HepG2 (cell line): ENCODE measurements at regions of chr19 and their contacts with region 1.

Region 1: DNA sequence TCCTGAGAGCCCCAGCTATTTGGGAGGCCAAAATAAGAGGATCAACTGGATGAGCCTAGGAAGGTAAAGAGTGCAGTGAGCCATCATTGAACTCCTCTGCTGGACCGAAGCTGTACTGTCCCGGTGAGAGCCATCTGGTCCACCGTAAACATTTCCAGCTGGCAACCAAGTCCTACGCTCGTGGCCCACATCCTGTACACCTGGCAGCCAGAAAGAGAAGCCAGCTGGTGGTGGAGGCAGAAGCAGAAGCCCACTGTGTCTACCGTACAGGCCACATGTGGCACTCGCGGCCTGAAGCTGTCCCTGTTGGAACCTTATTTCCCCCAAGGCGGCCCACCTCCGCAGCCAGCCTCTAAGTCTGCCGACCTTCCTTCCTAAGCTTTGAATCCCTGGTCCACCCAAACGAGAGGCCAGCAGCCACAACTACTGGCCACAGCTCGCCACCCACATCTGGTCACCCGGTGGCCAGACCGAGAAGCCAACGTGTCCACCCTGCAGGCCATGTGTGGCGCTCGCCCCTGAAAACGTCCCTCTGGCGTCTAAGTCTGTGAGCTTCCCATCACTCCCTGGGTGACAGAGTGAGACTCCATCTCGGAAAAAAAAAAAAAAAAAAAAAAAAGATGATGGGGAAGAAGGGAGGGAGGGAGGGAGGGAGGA is 14.2 kb upstream of the ZNF91 start:
- DNase-seq: no peak
- ATAC-seq: peak; percentile 62
- H3K4me3 ChIP-seq: no peak overlapping the region
- H3K27ac ChIP-seq: no peak overlapping the region
- H3K4me1 ChIP-seq: peaks cover 16% of the 10 kb centered on the region
- H3K27me3 ChIP-seq: no peaks in the 10 kb centered on the region
- CTCF ChIP-seq: no peak
- EP300 ChIP-seq: no peak
- POLR2A ChIP-seq: no peak
- RAD21 ChIP-seq: no peak

Region 2: DNA sequence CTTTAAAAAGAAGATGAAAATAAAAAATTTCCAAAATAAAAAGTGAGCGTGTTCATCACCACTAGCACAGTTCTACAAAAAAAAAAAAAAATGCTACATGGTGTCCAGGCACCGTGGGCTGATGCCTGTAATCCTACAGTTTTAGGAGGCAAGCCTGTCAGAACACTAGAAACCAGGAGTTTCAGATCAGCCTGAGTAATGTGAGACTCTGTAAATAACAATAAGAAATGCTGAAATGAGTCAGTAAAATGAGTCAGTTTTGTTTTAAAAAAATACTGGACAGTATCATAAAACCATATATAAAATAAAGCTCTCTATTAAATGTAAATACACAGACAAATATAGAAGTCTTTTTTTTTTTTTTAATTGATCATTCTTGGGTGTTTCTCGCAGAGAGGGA is 44.3 kb before region 1 on chr19:
- CTCF ChIA-PET with region 1: no interaction called
- POLR2A ChIA-PET with region 1: no interaction called
- in situ Hi-C with region 1: no loop called
- intact Hi-C with region 1: no loop called
- DNase-seq: no peak
- ATAC-seq: no peak
- H3K4me3 ChIP-seq: no peak overlapping the region
- H3K27ac ChIP-seq: no peak overlapping the region
- H3K4me1 ChIP-seq: no peaks in the 10 kb centered on the region
- H3K27me3 ChIP-seq: no peaks in the 10 kb centered on the region
- CTCF ChIP-seq: no peak
- EP300 ChIP-seq: no peak
- POLR2A ChIP-seq: no peak
- RAD21 ChIP-seq: no peak

Region 3: DNA sequence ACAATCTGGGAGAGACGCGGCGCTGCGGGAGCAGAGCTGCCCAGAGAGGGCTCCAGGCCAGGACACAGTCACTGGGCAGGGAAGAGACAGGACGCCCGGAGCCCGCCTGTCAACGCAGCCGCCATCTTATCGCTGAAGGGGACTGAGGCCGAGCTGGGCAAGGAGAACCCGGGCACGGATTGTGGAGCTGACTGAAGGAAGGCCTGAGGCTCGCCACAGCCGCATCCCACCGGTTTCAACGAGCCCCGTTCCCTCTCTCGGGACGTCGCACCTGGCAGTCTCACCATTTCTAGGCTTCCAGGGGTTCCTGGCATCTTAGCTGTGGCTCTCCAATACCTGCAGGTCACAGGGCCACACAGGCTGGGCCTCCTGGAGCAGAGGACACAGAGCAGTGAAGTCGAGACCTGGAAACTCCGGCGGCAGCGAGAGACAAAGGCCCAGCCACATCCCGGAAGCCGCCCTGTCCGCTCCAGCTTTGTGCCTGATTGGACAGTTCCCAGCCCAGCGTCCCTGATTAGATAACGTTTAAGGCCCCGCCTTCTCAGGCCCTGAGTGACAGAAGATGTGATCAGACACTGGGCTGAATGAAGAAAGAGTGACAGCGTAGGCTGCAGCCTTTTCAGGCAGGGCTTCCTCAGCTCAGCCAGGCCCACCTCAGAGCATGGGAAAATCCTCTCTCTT is 14.3 kb before region 1 on chr19 and contains the start of gene ZNF91:
- CTCF ChIA-PET with region 1: no interaction called
- POLR2A ChIA-PET with region 1: interaction called, 19 read pairs
- in situ Hi-C with region 1: no loop called
- intact Hi-C with region 1: no loop called
- DNase-seq: peak; percentile 98
- ATAC-seq: peak; percentile 97
- H3K4me3 ChIP-seq: peak within 1 kb of the TSS; percentile 91 to 97 (median 95)
- H3K27ac ChIP-seq: peak within 1 kb of the TSS; percentile 96
- H3K4me1 ChIP-seq: peaks cover 35% of the 10 kb centered on the region
- H3K27me3 ChIP-seq: no peaks in the 10 kb centered on the region
- CTCF ChIP-seq: 0 out of 2 replicates have a peak, but pooled peaks have one; percentile 17
- EP300 ChIP-seq: no peak
- POLR2A ChIP-seq: peak; percentile 96 to 97
- RAD21 ChIP-seq: no peak
- total RNA-seq, gene ZNF91: 21.5 and 30.7 TPM in 2 replicates

Region 4: DNA sequence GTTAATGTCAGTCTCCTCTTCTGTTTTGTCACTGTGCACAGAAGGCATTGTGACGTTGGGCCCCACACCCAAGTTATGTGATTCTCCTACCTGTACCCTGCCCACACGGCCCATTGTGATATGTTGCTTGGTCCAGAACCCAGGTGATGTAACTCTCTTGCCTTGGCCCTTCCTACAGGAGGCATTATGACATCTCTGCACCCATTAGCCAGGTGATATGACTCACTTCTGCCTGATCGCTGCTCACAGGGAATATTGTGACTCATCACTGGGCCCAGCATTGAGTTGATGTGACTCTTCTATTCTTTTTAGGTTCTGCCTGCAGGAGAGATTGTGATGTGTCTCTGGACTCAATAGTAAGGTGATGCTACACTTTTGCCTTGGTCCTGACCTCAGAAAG is 51.1 kb after region 1 on chr19:
- CTCF ChIA-PET with region 1: no interaction called
- POLR2A ChIA-PET with region 1: no interaction called
- in situ Hi-C with region 1: no loop called
- intact Hi-C with region 1: no loop called
- DNase-seq: no peak
- ATAC-seq: no peak
- H3K4me3 ChIP-seq: no peak overlapping the region
- H3K27ac ChIP-seq: no peak overlapping the region
- H3K4me1 ChIP-seq: no peaks in the 10 kb centered on the region
- H3K27me3 ChIP-seq: no peaks in the 10 kb centered on the region
- CTCF ChIP-seq: no peak
- EP300 ChIP-seq: no peak
- POLR2A ChIP-seq: no peak
- RAD21 ChIP-seq: no peak